ENCODE measurements at regions of chr10 and their contacts with region 1.

Region 1: GRCh38 chr10:119080521-119081260 is at the start of gene EIF3A:
- DNase-seq: peak; percentile 90
- ATAC-seq: peak; percentile 81
- H3K4me3 Mint-ChIP-seq: peak within 1 kb of the TSS; percentile 87
- H3K27ac Mint-ChIP-seq: peak within 1 kb of the TSS; percentile 95
- H3K4me1 Mint-ChIP-seq: peaks cover 25% of the 10 kb centered on the region
- H3K27me3 Mint-ChIP-seq: no peaks in the 10 kb centered on the region
- CTCF ChIP-seq: no peak
- total RNA-seq, gene EIF3A: 127 to 131 TPM

Region 2: DNA sequence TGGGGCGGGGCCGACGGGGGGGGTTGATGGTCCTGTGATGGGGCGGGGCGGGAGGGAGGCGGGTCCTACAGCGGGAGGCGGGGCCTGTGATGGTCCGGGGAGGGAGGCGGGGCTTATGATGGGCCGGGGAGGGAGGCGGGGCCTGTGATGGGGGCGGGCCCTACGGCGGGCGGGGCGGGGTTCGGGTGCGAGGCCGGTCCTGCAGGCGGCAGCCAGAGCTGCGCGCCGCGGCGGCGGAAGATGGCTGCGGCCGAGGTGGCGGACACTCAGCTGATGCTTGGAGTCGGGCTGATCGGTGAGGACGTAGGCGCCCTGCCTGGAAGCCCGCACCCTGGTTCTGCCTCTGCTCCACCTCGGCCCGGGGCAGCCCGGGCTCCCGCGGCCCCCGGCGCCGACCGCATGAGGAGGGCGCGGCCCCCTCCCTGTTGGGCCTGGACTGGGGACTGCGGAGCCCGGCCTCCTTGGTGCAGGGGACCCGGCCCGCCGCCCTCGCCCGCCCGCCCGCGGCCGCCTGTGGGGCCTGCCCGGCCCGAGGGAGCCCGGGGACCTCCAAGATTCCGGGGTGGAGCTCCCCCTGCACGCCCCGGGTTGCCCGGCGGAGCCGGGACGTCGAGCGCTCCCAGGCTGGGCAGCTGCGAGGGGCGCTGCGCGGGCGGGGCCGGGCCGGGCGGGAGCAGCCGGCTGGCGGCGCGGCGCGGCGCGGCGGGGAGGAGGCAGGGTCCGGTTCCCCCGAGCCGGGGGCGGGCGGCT is 23.4 kb after region 1 on chr10 and contains the start of gene DENND10:
- CTCF ChIA-PET with region 1: no interaction called
- POLR2A ChIA-PET with region 1: interaction called, 11 read pairs
- intact Hi-C with region 1: no loop called
- DNase-seq: peak; percentile 83
- ATAC-seq: peak; percentile 94
- H3K4me3 Mint-ChIP-seq: peak within 1 kb of the TSS; percentile 72
- H3K27ac Mint-ChIP-seq: no peak within 1 kb of the TSS
- H3K4me1 Mint-ChIP-seq: peaks cover 11% of the 10 kb centered on the region
- H3K27me3 Mint-ChIP-seq: no peaks in the 10 kb centered on the region
- CTCF ChIP-seq: no peak
- total RNA-seq, gene DENND10: 16.9 to 18.6 TPM